Lower leg skin (tissue), 4 donors: ENCODE measurements at regions of chr10 and their contacts with region 1.

Region 1: GRCh38 chr10:11782793-11783557 is 40.2 kb upstream of the PROSER2 start:
- DNase-seq: no peak
- H3K4me3 ChIP-seq: no peak overlapping the region
- CTCF ChIP-seq: peak in 1 of 3 donors; percentile 18
- POLR2A ChIP-seq: no peak

Region 2: DNA sequence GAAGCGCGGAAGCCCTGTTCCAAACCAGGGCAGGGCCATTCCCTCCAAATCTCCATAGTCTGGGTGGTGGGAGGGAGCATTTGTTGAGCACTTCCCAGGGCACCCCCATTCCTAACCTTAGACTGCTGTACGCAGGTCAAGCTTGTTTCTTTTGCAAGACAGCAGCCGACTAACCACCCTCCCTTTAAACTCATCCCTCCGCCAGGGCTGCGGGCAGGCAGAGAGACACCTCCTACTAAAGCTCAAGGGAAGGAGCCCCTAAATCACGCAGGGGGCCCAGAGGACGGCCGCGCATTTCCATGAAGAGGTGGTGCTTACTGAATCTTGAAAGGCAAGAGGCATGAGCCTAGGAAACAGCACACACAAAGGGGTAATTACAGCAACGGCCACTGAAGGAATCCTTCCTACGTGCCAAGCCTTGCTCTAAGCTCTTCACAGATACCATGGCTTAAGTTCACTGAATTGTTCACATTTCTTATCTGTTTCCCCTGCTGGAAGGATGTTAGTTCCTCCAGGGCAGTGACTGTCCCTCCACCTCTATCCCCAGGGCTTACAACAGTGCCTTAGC is 130.2 kb after region 1 on chr10:
- intact Hi-C with region 1: no loop called
- DNase-seq: peak in 1 of 2 donors; percentile 43
- H3K4me3 ChIP-seq: no peak overlapping the region
- CTCF ChIP-seq: no peak
- POLR2A ChIP-seq: no peak

Region 3: GRCh38 chr10:11986593-11987216 is 203.7 kb after region 1 on chr10:
- intact Hi-C with region 1: loop called (anchors 5 kb)
- DNase-seq: peak; percentile 63 to 91
- H3K4me3 ChIP-seq: no peak overlapping the region
- CTCF ChIP-seq: no peak
- POLR2A ChIP-seq: no peak

Region 4: DNA sequence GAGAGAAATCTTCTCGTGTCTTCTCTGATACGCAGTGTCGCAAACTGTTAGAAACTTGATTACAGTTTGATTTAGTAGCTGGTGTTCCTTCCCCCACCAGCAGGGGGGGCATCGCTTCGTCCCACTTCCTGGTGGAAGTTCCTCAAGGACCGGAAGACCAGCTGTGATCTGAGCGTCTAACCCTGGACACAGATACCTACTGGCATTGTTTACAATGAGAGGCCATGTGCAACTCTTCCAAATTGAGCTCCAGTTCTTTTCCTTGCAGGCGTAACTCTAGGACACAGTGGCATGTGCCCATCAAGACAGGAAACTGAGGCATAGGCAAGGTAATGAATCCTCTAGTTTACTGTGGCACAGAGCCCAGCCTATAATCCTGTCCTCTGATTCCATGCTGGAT is 999.6 kb after region 1 on chr10:
- intact Hi-C with region 1: no loop called
- DNase-seq: no peak
- H3K4me3 ChIP-seq: no peak overlapping the region
- CTCF ChIP-seq: no peak
- POLR2A ChIP-seq: no peak